Activated naive CD4-positive, alpha-beta T cell treated with anti-CD3 and anti-CD28 coated beads for 36 hours (primary cell): ENCODE measurements at regions of chrX and their contacts with region 1.

Region 1: DNA sequence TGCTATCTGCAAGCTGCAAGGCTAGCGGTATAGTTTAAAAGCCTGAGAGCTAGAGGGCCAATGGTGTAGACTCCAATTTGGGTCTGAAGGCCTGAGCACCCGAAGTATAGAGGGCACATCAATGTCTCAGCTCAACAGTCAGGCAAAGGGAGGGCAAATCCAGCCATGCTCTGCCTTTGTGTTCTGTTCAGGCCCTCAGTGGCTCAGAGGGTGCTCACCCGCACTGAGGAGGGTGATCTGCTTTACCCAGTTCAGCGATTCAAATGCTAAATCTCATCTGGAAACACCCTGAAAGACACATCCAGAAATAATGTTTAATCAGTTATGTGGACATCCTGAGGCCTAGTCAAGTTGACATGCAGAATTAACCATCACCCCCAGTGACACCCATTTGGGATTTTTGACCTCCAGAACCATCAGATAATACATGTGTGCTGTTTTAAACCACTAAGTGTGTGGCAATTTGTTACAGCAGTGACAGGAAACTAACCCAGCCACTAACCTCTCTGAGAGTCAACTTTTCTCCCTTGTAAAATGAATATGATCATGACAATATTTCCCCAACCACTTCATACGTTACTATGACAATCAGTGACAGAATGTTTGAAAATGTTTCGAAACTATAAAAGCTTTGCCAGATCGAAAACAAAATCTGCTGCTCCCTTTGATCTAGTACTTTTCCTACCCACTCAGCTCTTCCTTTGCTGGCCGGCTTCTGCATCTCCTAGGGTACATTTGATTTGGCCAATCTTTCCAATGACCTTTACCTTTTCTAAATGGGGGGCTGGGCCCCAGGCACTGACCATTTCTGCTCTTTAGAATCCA is 8.4 kb upstream of the TBL1X start:
- DNase-seq: peak; percentile 45
- H3K4me3 Mint-ChIP-seq: no peak overlapping the region
- H3K27ac Mint-ChIP-seq: peak overlapping the region; percentile 74
- H3K4me1 Mint-ChIP-seq: peaks cover 38% of the 10 kb centered on the region
- H3K27me3 Mint-ChIP-seq: no peaks in the 10 kb centered on the region

Region 2: DNA sequence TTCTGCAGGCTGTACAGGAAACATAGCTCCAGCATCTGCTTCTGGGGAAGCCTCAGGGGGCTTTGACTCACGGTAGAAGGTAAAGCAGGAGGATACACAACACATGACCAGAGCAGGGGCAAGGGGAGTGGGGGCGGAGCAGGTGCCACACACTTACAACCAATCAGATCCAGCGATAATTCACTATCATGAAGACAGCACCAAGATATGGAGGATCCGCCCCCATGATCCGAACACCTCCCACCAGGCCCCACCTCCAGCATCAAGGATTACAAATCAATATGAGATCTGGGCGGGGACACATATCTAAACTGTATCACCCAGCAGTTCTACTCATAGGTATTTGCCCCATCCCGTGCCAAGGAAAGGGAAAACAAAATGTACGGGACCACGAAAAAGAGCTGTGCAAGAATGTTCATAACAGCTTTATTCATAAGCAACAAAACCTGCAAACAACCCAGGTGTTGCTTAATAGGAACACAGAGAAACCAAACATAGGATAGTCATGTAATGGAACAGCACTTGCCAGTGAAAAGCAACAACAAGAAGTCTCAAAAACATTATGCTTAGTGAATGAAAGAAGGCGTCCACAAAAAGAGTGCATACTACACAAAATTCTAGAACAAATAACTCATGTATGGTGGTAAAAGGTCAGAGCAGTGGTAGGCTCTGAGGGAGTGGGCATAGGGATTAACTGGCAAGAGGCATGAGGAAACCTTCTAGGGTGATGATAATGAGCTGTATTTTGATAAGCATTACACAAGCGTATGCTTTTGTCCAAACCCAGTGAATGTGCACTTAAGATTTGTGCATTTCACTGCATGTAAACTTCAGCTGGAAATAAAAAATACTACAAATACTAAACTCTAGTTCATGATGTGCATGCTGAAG is 291.7 kb before region 1 on chrX:
- CTCF ChIA-PET with region 1: no interaction called
- intact Hi-C with region 1: loop called (anchors 2 kb)
- DNase-seq: no peak
- H3K4me3 Mint-ChIP-seq: no peak overlapping the region
- H3K27ac Mint-ChIP-seq: no peak overlapping the region
- H3K4me1 Mint-ChIP-seq: peaks cover 41% of the 10 kb centered on the region
- H3K27me3 Mint-ChIP-seq: no peaks in the 10 kb centered on the region

Region 3: GRCh38 chrX:9352694-9353411 is 103.6 kb before region 1 on chrX:
- CTCF ChIA-PET with region 1: no interaction called
- intact Hi-C with region 1: loop called (anchors 1 kb)
- DNase-seq: peak; percentile 58
- H3K4me3 Mint-ChIP-seq: no peak overlapping the region
- H3K27ac Mint-ChIP-seq: peak overlapping the region; percentile 4
- H3K4me1 Mint-ChIP-seq: peaks cover 29% of the 10 kb centered on the region
- H3K27me3 Mint-ChIP-seq: no peaks in the 10 kb centered on the region

Region 4: DNA sequence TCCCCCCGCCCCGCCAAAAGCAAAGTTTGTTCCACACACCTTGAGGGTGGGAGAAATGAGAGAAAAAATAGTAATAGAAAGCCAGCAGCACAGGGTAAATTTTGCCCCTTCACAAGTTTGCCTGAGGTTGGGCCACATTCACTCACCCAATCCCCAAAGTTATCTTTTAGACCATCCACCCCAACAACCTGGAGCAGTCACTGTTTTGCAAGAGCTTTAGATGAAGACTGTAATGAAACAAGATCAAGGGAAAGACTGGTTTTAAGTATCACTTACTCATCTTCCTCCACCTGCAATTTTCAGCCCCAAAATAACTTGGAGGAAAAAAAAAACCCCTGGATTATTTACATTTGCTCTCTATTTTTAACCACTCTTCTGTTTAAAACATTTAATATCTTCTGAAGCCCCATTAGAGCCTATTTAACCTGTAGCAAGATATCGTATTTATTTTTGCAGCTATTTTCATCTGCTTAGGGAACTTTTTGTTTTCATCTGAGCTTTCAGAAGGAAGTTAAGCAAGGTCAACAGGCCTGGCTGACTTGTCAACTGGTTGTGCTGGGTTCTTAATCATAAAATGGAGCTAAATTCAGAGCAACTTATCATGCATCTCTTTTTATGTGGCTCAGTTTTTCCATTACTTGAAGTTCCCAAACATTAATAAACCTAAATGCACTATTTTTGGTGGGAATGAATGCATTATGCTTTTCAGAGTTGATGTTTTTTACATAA is 16.2 kb before region 1 on chrX:
- CTCF ChIA-PET with region 1: no interaction called
- intact Hi-C with region 1: loop called (anchors 1 kb)
- DNase-seq: no peak
- H3K4me3 Mint-ChIP-seq: no peak overlapping the region
- H3K27ac Mint-ChIP-seq: no peak overlapping the region
- H3K4me1 Mint-ChIP-seq: peaks cover 19% of the 10 kb centered on the region
- H3K27me3 Mint-ChIP-seq: no peaks in the 10 kb centered on the region

Region 5: DNA sequence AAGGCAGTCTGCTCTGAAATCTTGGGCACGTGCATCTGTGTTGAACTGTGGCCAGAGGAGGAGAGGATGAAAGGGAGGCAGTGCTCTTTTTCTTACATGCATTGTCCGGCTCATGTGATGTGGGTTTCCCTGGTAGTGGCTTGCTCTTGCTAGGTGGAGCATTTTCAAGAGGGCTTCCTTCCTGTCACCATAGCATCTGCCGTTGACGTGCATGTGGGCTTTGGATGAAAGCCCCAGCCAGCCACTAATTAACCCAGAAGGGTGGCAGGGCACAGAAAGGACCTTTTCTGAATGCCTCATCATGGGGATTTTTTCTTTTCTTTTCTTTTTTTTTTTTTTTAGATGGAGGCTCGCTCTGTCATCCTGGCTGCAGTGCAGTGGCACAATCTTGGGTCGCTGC is 187.9 kb after region 1 on chrX:
- CTCF ChIA-PET with region 1: no interaction called
- intact Hi-C with region 1: loop called (anchors 2 kb)
- DNase-seq: peak; percentile 70
- H3K4me3 Mint-ChIP-seq: no peak overlapping the region
- H3K27ac Mint-ChIP-seq: no peak overlapping the region
- H3K4me1 Mint-ChIP-seq: peaks cover 31% of the 10 kb centered on the region
- H3K27me3 Mint-ChIP-seq: no peaks in the 10 kb centered on the region

Region 6: GRCh38 chrX:10071451-10072144 is 615.1 kb after region 1 on chrX:
- CTCF ChIA-PET with region 1: no interaction called
- intact Hi-C with region 1: no loop called
- DNase-seq: no peak
- H3K4me3 Mint-ChIP-seq: no peak overlapping the region
- H3K27ac Mint-ChIP-seq: no peak overlapping the region
- H3K4me1 Mint-ChIP-seq: peaks cover 12% of the 10 kb centered on the region
- H3K27me3 Mint-ChIP-seq: no peaks in the 10 kb centered on the region